ENCODE measurements at regions of chr3 and their contacts with region 1.

Region 1: GRCh38 chr3:44529927-44530326 is 25.1 kb upstream of the ZKSCAN7 start:
- DNase-seq: no peak
- H3K4me3 Mint-ChIP-seq: no peak overlapping the region
- H3K27ac Mint-ChIP-seq: no peak overlapping the region
- H3K4me1 Mint-ChIP-seq: no peaks in the 10 kb centered on the region
- H3K27me3 Mint-ChIP-seq: peaks cover 2% of the 10 kb centered on the region

Region 2: GRCh38 chr3:44323341-44323955 is 206.5 kb before region 1 on chr3:
- intact Hi-C with region 1: loop called (anchors 5 kb)
- DNase-seq: peak; percentile 16
- H3K4me3 Mint-ChIP-seq: no peak overlapping the region
- H3K27ac Mint-ChIP-seq: no peak overlapping the region
- H3K4me1 Mint-ChIP-seq: peaks cover 1% of the 10 kb centered on the region
- H3K27me3 Mint-ChIP-seq: peaks cover 27% of the 10 kb centered on the region

Region 3: GRCh38 chr3:44624749-44625480 is 95.0 kb after region 1 on chr3 and contains the start of gene ZNF197:
- intact Hi-C with region 1: loop called (anchors 10 kb)
- DNase-seq: peak; percentile 53
- H3K4me3 Mint-ChIP-seq: peak within 1 kb of the TSS; percentile 88
- H3K27ac Mint-ChIP-seq: peak within 1 kb of the TSS; percentile 69
- H3K4me1 Mint-ChIP-seq: peaks cover 17% of the 10 kb centered on the region
- H3K27me3 Mint-ChIP-seq: no peaks in the 10 kb centered on the region
- total RNA-seq, gene ZNF197: 10.4 and 10.7 TPM in 2 replicates

Region 4: DNA sequence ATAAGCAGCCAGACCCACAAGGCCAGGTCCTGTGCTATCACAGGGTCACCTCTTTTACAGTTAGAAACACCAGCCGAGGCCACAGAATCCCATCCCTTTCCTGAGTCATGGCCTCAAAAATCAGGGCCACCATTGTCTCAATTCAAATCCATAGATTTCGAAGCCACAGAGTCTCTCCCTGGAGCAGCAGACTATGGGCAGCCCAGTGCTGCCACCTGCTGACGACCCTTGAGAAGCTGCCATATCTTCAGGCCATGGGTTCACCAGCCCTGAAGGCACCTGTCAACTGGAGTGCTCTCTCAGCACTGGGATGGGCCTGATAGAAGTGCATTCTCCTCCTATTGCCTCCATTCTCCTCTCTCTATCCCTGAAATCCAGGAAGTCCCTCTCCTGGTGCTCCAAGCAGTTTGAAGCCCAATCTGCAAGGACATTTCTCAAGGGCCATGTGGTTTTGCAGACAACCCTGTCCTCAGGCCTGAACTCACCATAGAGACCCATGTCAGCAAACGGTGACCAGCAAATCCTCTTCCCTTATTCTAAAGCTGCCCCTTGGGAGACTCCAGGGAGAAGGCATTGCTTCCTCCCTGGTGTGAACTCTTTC is 384.0 kb after region 1 on chr3:
- intact Hi-C with region 1: loop called (anchors 1 kb)
- DNase-seq: peak; percentile 36
- H3K4me3 Mint-ChIP-seq: no peak overlapping the region
- H3K27ac Mint-ChIP-seq: no peak overlapping the region
- H3K4me1 Mint-ChIP-seq: no peaks in the 10 kb centered on the region
- H3K27me3 Mint-ChIP-seq: peaks cover 9% of the 10 kb centered on the region

Region 5: DNA sequence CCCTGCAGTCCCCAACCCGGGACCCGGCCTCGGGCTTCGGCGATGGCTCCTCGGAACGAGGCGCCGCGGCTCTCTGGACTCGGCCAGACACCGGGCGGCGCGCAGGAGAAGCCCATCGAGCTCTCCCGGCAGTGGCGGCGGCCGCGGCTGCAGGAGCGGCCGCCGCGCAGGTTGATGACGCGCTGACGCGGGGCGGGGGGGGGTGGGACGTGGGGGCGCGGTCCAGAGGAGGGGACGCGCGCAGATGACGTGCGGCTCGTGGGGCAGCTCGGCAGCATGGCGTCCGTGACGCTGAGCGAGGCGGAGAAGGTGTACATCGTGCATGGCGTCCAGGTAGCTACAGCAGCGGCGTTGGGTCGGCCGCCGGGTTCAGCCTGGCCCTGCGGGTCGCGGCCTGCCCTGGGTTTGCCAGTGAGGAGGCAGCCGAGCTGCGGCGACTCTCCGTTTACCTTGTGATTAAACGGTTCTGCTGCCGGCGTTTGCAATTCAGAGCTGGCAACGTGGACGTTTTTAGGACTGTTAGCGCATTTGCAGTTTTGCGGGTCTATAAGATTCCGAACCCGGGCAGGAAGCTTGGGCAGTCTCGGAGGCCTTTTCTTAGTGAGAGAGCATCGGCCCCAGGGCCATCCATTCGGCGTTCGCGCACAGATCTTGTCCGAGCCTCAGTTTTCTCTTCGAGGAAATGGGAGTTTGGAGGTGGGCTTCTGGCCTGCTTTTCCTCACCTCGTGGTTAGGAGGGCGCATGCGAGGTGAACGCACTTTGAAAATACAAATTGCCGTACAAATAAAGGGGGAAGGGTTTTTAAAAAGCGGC is 446.3 kb after region 1 on chr3 and contains the starts of genes EXOSC7 and ZDHHC3:
- intact Hi-C with region 1: loop called (anchors 5 kb)
- DNase-seq: peak; percentile 81
- H3K4me3 Mint-ChIP-seq: peak within 1 kb of the TSS; percentile 94
- H3K27ac Mint-ChIP-seq: peak within 1 kb of the TSS; percentile 89
- H3K4me1 Mint-ChIP-seq: peaks cover 48% of the 10 kb centered on the region
- H3K27me3 Mint-ChIP-seq: no peaks in the 10 kb centered on the region
- total RNA-seq, gene EXOSC7: 83.0 and 86.5 TPM in 2 replicates
- total RNA-seq, gene ZDHHC3: 38.0 and 40.3 TPM in 2 replicates

Region 6: GRCh38 chr3:45037734-45038455 is 508.0 kb after region 1 on chr3:
- intact Hi-C with region 1: loop called (anchors 10 kb)
- DNase-seq: peak; percentile 88
- H3K4me3 Mint-ChIP-seq: no peak overlapping the region
- H3K27ac Mint-ChIP-seq: no peak overlapping the region
- H3K4me1 Mint-ChIP-seq: peaks cover 53% of the 10 kb centered on the region
- H3K27me3 Mint-ChIP-seq: peaks cover 8% of the 10 kb centered on the region